Posterior vena cava (tissue), 2 donors: ENCODE measurements at regions of chr12 and their contacts with region 1.

Region 1: GRCh38 chr12:130661486-130662255 is 54.4 kb downstream of the RIMBP2 start:
- DNase-seq: peak; percentile 35

Region 2: DNA sequence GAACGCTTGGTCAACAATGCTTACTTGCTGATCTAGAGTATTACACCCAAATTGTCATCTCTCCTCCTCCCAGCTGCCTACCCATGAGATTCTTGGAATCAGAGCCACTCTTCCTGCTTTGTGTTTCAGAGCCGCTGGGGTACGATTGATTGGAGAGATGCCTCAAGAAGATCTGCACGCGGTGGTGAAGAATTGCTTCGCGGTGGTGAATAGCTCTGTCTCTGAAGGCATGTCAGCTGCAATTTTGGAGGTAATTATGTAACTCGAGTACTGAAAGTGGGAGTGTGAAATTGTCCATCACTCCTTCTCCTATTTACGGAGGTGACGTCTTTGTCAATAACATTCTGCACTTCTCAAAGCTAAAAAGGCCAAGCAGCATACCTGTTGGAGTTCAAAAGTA is 1714.5 kb before region 1 on chr12:
- intact Hi-C with region 1: loop called in 1 of 2 experiments (anchors 5 kb)
- DNase-seq: peak; percentile 0

Region 3: DNA sequence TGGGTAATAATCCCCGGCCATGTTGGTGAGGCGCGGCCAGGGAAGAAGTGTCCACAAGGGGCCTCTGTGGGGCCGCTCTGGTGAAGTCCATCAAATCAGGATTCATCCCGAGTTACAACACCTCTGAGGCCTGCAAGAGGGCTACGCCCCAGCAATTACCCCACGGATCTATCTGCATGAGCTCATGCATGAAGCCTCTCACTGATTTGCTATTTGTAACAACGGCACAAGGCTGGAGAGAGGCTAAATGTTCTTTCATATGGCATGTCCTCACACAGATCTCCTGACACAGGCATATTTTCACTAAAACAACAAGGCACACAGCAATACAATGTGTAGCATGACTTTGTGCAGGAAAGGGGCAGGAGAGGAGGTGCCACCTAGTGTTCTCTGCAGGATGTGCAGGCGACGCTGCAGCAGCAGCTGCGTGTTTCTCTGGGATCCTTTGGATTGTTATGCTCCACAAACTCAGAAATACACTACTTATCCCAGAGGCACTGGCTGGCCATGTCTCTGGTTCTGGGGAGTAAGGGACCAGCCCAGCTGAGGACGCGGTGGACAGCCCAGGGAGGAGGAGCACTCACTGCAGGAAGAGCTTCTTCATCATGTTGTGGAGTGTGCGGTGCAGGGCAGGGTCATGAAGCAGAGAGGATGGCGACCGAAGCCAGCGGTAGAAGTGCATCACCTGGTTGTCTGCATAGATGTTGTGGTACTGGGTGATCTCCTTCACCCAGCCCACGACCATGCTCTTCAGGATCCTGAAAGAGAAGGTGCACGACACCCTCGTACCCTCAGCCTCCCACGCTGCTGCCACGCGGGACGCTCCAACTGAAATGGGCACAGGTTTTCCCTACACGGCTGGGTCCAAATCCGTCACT is 1977.1 kb after region 1 on chr12:
- intact Hi-C with region 1: loop called in 1 of 2 experiments (anchors 10 kb)
- DNase-seq: peak; percentile 64